ENCODE measurements at regions of chr6 and their contacts with region 1.

Region 1: GRCh38 chr6:132715204-132715603 is 1.3 kb upstream of the VNN1 start:
- DNase-seq: peak; percentile 66
- ATAC-seq: peak; percentile 100
- H3K4me3 Mint-ChIP-seq: no peak overlapping the region
- H3K27ac Mint-ChIP-seq: no peak overlapping the region
- H3K4me1 Mint-ChIP-seq: no peaks in the 10 kb centered on the region; the same call in 1 of the 2 replicates
- H3K27me3 Mint-ChIP-seq: no peaks in the 10 kb centered on the region
- CTCF ChIP-seq: no peak

Region 2: GRCh38 chr6:132530293-132530974 is 184.8 kb before region 1 on chr6:
- CTCF ChIA-PET with region 1: interaction called, 14 read pairs
- POLR2A ChIA-PET with region 1: no interaction called
- DNase-seq: peak; percentile 58
- ATAC-seq: peak; percentile 85
- H3K4me3 Mint-ChIP-seq: peak overlapping the region; percentile 62
- H3K27ac Mint-ChIP-seq: peak overlapping the region; percentile 92; the same call in 1 of the 2 replicates
- H3K4me1 Mint-ChIP-seq: peaks cover 11% of the 10 kb centered on the region
- H3K27me3 Mint-ChIP-seq: no peaks in the 10 kb centered on the region
- CTCF ChIP-seq: peak; percentile 82

Region 3: GRCh38 chr6:132669690-132670291 is 45.4 kb before region 1 on chr6:
- CTCF ChIA-PET with region 1: interaction called, 10 read pairs
- POLR2A ChIA-PET with region 1: no interaction called
- DNase-seq: no peak
- ATAC-seq: peak; percentile 65
- H3K4me3 Mint-ChIP-seq: no peak overlapping the region
- H3K27ac Mint-ChIP-seq: no peak overlapping the region
- H3K4me1 Mint-ChIP-seq: peaks cover 19% of the 10 kb centered on the region
- H3K27me3 Mint-ChIP-seq: no peaks in the 10 kb centered on the region
- CTCF ChIP-seq: peak; percentile 42; the same call in 1 of the 2 replicates